ENCODE measurements at regions of chr13 and their contacts with region 1.

Region 1: GRCh38 chr13:31044377-31045285 is 112.2 kb downstream of the TEX26 start:
- DNase-seq: peak; percentile 90
- ATAC-seq: peak; percentile 74
- H3K4me3 Mint-ChIP-seq: peak overlapping the region; percentile 6
- H3K27ac Mint-ChIP-seq: peak overlapping the region; percentile 74
- H3K4me1 Mint-ChIP-seq: peaks cover 52% of the 10 kb centered on the region
- H3K27me3 Mint-ChIP-seq: peaks cover 16% of the 10 kb centered on the region

Region 2: GRCh38 chr13:30865123-30866049 is 179.2 kb before region 1 on chr13:
- CTCF ChIA-PET with region 1: interaction called, 15 read pairs
- POLR2A ChIA-PET with region 1: no interaction called
- DNase-seq: peak; percentile 67
- ATAC-seq: peak; percentile 86
- H3K4me3 Mint-ChIP-seq: no peak overlapping the region
- H3K27ac Mint-ChIP-seq: no peak overlapping the region
- H3K4me1 Mint-ChIP-seq: no peaks in the 10 kb centered on the region
- H3K27me3 Mint-ChIP-seq: peaks cover 22% of the 10 kb centered on the region

Region 3: GRCh38 chr13:30978981-30979956 is 65.4 kb before region 1 on chr13:
- CTCF ChIA-PET with region 1: interaction called, 46 read pairs
- POLR2A ChIA-PET with region 1: no interaction called
- DNase-seq: peak; percentile 48
- ATAC-seq: no peak
- H3K4me3 Mint-ChIP-seq: no peak overlapping the region
- H3K27ac Mint-ChIP-seq: no peak overlapping the region
- H3K4me1 Mint-ChIP-seq: no peaks in the 10 kb centered on the region
- H3K27me3 Mint-ChIP-seq: peaks cover 34% of the 10 kb centered on the region

Region 4: GRCh38 chr13:31009166-31009565 is 35.5 kb before region 1 on chr13:
- CTCF ChIA-PET with region 1: interaction called, 11 read pairs
- POLR2A ChIA-PET with region 1: no interaction called
- DNase-seq: peak; percentile 18
- ATAC-seq: no peak
- H3K4me3 Mint-ChIP-seq: no peak overlapping the region
- H3K27ac Mint-ChIP-seq: no peak overlapping the region
- H3K4me1 Mint-ChIP-seq: peaks cover 37% of the 10 kb centered on the region
- H3K27me3 Mint-ChIP-seq: peaks cover 28% of the 10 kb centered on the region

Region 5: GRCh38 chr13:31029102-31029501 is 15.5 kb before region 1 on chr13:
- CTCF ChIA-PET with region 1: interaction called, 12 read pairs
- POLR2A ChIA-PET with region 1: no interaction called
- DNase-seq: no peak
- ATAC-seq: no peak
- H3K4me3 Mint-ChIP-seq: no peak overlapping the region
- H3K27ac Mint-ChIP-seq: no peak overlapping the region
- H3K4me1 Mint-ChIP-seq: no peaks in the 10 kb centered on the region
- H3K27me3 Mint-ChIP-seq: peaks cover 41% of the 10 kb centered on the region

Region 6: GRCh38 chr13:31056644-31057271 is 12.1 kb after region 1 on chr13:
- CTCF ChIA-PET with region 1: interaction called, 17 read pairs
- POLR2A ChIA-PET with region 1: no interaction called
- DNase-seq: no peak
- ATAC-seq: peak; percentile 76
- H3K4me3 Mint-ChIP-seq: no peak overlapping the region
- H3K27ac Mint-ChIP-seq: no peak overlapping the region
- H3K4me1 Mint-ChIP-seq: no peaks in the 10 kb centered on the region
- H3K27me3 Mint-ChIP-seq: peaks cover 15% of the 10 kb centered on the region